ENCODE measurements at regions of chr10 and their contacts with region 1.

Region 1: DNA sequence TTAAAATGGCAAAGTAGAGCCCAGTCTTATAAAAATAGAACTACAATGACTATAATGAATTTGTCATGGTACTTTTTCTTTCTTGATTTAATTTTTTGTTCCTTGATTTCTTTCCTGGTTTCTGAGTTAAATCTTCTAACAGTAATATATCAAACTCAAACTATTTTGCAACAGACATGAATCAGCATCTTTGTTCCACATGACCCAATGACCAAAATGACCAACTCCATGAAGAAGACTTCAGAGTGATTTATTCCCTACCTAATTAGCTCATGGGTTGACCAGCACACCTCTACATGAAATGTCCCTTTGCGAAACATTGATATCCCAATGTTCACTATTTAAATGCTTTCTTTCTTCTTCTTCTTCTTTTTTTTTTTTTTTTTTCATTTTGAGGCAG is 30.9 kb downstream of the NMT2 start:
- DNase-seq: no peak
- H3K4me3 ChIP-seq: no peak overlapping the region
- H3K4me3 Mint-ChIP-seq: no peak overlapping the region
- H3K27ac ChIP-seq: no peak overlapping the region
- H3K27ac Mint-ChIP-seq: peak overlapping the region in 1 of 8 donors; percentile 36
- H3K4me1 ChIP-seq: peaks cover 14% of the 10 kb centered on the region
- H3K4me1 Mint-ChIP-seq: peaks cover 15 to 24% (median 19%) of the 10 kb centered on the region in 3 donors
- H3K27me3 ChIP-seq: no peaks in the 10 kb centered on the region
- H3K27me3 Mint-ChIP-seq: no peaks in the 10 kb centered on the region

Region 2: DNA sequence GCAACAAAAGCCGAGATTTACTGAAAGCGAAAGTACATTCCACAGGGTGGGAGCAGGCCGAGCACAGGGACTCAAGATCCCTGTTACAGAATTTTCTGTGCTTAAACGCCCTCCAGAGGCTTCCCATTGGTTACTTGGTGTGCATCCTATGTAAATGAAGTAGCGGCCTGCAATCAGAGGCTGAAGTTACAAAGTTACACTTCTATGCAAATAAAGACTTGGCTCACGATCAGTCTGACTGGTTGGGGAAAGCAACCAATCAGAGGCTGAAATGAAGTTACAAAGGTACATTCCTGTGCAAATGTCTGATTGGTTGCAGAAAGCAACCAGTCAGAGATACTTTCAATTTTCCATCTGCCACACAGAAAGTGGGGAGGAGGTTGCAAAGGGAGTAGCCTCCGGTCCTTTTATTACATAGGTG is 53.1 kb before region 1 on chr10:
- CTCF ChIA-PET with region 1: no interaction called
- POLR2A ChIA-PET with region 1: interaction called, 11 read pairs
- DNase-seq: peak in 1 of 5 donors; percentile 34
- H3K4me3 ChIP-seq: no peak overlapping the region
- H3K4me3 Mint-ChIP-seq: peak overlapping the region in 5 of 7 donors; percentile 28 to 63 (median 49)
- H3K27ac ChIP-seq: no peak overlapping the region
- H3K27ac Mint-ChIP-seq: peak overlapping the region in 2 of 8 donors; percentile 13 to 38
- H3K4me1 ChIP-seq: no peaks in the 10 kb centered on the region
- H3K4me1 Mint-ChIP-seq: peaks cover 0 to 16% (median 0%) of the 10 kb centered on the region in 3 donors
- H3K27me3 ChIP-seq: no peaks in the 10 kb centered on the region
- H3K27me3 Mint-ChIP-seq: peaks cover 0 to 3% of the 10 kb centered on the region in 2 donors

Measured in CD8-positive, alpha-beta memory T cell (primary cell).